ENCODE measurements at regions of chr17 and their contacts with region 1.

Region 1: GRCh38 chr17:80426681-80427326 is 11.8 kb downstream of the ENDOV start:
- DNase-seq: peak; percentile 86
- ATAC-seq: peak; percentile 98
- H3K4me3 Mint-ChIP-seq: no peak overlapping the region
- H3K27ac Mint-ChIP-seq: no peak overlapping the region
- H3K4me1 Mint-ChIP-seq: peaks cover 11% of the 10 kb centered on the region
- H3K27me3 Mint-ChIP-seq: no peaks in the 10 kb centered on the region
- CTCF ChIP-seq: peak; percentile 94

Region 2: GRCh38 chr17:80395402-80396151 is 31.2 kb before region 1 on chr17:
- CTCF ChIA-PET with region 1: no interaction called
- POLR2A ChIA-PET with region 1: no interaction called
- intact Hi-C with region 1: no loop called
- DNase-seq: no peak
- ATAC-seq: no peak
- H3K4me3 Mint-ChIP-seq: no peak overlapping the region
- H3K27ac Mint-ChIP-seq: no peak overlapping the region
- H3K4me1 Mint-ChIP-seq: peaks cover 6% of the 10 kb centered on the region
- H3K27me3 Mint-ChIP-seq: no peaks in the 10 kb centered on the region
- CTCF ChIP-seq: no peak

Region 3: DNA sequence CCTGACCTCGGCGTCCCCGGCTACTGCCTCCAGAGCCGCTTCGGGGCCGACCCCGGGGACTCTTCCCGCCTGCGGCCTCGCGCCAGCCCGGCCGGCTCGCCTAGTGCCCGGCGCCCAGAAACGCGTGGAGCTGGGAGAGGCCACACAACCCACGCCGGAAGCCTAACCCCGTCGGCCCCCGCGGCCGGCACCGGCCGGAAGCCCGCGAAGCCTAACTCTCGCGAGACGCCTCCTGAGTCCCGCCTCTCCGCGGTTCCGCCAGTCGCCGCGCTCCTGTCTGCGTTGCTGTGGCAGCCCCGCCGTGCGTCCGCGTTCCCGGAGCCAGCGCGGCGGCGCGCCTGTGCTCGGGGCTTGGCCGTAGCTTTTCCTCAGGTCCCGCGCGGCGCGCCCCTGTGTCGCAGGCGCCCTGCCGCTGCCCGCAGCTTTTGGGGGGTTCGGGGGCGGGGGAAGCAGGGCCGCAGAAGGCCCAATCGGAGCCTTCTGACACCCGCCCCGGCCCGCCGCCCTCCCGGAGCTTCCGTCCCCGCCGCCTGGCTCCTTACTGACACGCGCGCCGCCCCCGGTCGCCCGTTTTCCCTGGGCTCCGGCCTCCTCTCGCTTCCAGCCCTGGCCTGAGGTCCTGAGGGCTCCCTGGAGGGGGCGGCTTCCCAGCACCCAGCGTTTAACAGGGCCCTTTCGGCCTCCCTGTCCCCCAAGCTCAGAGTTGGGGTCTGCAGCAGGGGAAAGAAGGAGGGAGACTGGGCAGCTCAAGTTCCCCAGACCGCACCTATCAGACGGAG is 27.9 kb after region 1 on chr17:
- CTCF ChIA-PET with region 1: interaction called, 11 read pairs
- POLR2A ChIA-PET with region 1: interaction called, 4 read pairs
- intact Hi-C with region 1: no loop called
- DNase-seq: peak; percentile 97
- ATAC-seq: peak; percentile 93
- H3K4me3 Mint-ChIP-seq: peak overlapping the region; percentile 99
- H3K27ac Mint-ChIP-seq: peak overlapping the region; percentile 92
- H3K4me1 Mint-ChIP-seq: peaks cover 28% of the 10 kb centered on the region
- H3K27me3 Mint-ChIP-seq: peaks cover 24% of the 10 kb centered on the region
- CTCF ChIP-seq: no peak

Region 4: GRCh38 chr17:80575057-80575875 is 148.5 kb after region 1 on chr17:
- CTCF ChIA-PET with region 1: interaction called, 11 read pairs
- POLR2A ChIA-PET with region 1: no interaction called
- intact Hi-C with region 1: loop called (anchors 5 kb)
- DNase-seq: peak; percentile 96
- ATAC-seq: peak; percentile 100
- H3K4me3 Mint-ChIP-seq: no peak overlapping the region
- H3K27ac Mint-ChIP-seq: no peak overlapping the region
- H3K4me1 Mint-ChIP-seq: peaks cover 10% of the 10 kb centered on the region
- H3K27me3 Mint-ChIP-seq: no peaks in the 10 kb centered on the region
- CTCF ChIP-seq: peak; percentile 100

Region 5: GRCh38 chr17:80981062-80981902 is 554.5 kb after region 1 on chr17:
- CTCF ChIA-PET with region 1: interaction called, 8 read pairs
- POLR2A ChIA-PET with region 1: no interaction called
- intact Hi-C with region 1: loop called (anchors 5 kb)
- DNase-seq: peak; percentile 35
- ATAC-seq: peak; percentile 50
- H3K4me3 Mint-ChIP-seq: no peak overlapping the region
- H3K27ac Mint-ChIP-seq: no peak overlapping the region
- H3K4me1 Mint-ChIP-seq: peaks cover 9% of the 10 kb centered on the region
- H3K27me3 Mint-ChIP-seq: peaks cover 10% of the 10 kb centered on the region
- CTCF ChIP-seq: peak; percentile 99

Measured in activated CD8-positive, alpha-beta T cell treated with anti-CD3 and anti-CD28 coated beads for 36 hours (primary cell).